ENCODE measurements at regions of chr14 and their contacts with region 1.

Region 1: GRCh38 chr14:60349663-60350365 is 100.8 kb downstream of the PPM1A start:
- DNase-seq: peak in 3 of 5 donors; percentile 8 to 22 (median 11)
- H3K4me3 ChIP-seq: no peak overlapping the region
- H3K27ac ChIP-seq: no peak overlapping the region
- H3K4me1 ChIP-seq: no peaks in the 10 kb centered on the region
- H3K27me3 ChIP-seq: no peaks in the 10 kb centered on the region
- CTCF ChIP-seq: peak; percentile 28 to 50 (median 29)
- EP300 ChIP-seq: no peak
- POLR2A ChIP-seq: no peak

Region 2: GRCh38 chr14:60561845-60562746 is 212.3 kb after region 1 on chr14:
- intact Hi-C with region 1: loop called in 1 of 4 experiments (anchors 10 kb)
- DNase-seq: peak in 4 of 5 donors; percentile 20 to 53 (median 26)
- H3K4me3 ChIP-seq: no peak overlapping the region
- H3K27ac ChIP-seq: no peak overlapping the region
- H3K4me1 ChIP-seq: no peaks in the 10 kb centered on the region
- H3K27me3 ChIP-seq: no peaks in the 10 kb centered on the region
- CTCF ChIP-seq: peak in 1 of 3 donors; percentile 19
- EP300 ChIP-seq: no peak
- POLR2A ChIP-seq: no peak

Measured in ovary (tissue), 10 donors.